Activated T-helper 1 cell treated with anti-CD3 and anti-CD28 coated beads, Interleukin-12 subunit alpha, Interleukin-12 subunit beta, Interleukin-2, Interleukin-4 antibody, amounts not matched to agents 30 ng/mL and 10 ng/mL and 1 ng/mL, durations not matched to agents 14 hours and 24 hours and 36 hours (primary cell): ENCODE measurements at regions of chr11 and their contacts with region 1.

Region 1: DNA sequence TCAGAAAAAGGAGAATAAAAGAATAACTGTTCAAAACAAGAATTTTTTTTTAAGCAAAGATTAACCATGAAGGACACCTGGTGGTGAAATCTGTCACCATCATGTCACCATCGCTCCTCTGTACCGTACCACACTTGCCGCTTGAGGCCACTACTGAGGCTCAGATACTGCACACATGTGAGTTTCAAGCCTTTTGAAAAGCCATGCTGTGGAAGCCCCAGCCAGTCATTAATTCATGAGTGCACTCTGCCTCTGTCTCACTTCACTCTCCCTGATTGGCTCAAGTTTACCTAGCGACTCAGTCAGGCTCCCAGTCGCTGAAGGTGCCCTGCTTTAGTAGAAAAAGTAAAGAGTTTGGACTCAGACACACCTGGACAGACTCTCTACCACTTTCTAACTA is 6.6 kb upstream of the MS4A12 start:
- DNase-seq: no peak
- H3K4me3 Mint-ChIP-seq: no peak overlapping the region
- H3K27ac Mint-ChIP-seq: no peak overlapping the region
- H3K4me1 Mint-ChIP-seq: no peaks in the 10 kb centered on the region
- H3K27me3 Mint-ChIP-seq: peaks cover 8% of the 10 kb centered on the region

Region 2: GRCh38 chr11:60211206-60211605 is 274.8 kb before region 1 on chr11:
- intact Hi-C with region 1: no loop called
- DNase-seq: no peak
- H3K4me3 Mint-ChIP-seq: no peak overlapping the region
- H3K27ac Mint-ChIP-seq: no peak overlapping the region
- H3K4me1 Mint-ChIP-seq: no peaks in the 10 kb centered on the region
- H3K27me3 Mint-ChIP-seq: no peaks in the 10 kb centered on the region

Region 3: DNA sequence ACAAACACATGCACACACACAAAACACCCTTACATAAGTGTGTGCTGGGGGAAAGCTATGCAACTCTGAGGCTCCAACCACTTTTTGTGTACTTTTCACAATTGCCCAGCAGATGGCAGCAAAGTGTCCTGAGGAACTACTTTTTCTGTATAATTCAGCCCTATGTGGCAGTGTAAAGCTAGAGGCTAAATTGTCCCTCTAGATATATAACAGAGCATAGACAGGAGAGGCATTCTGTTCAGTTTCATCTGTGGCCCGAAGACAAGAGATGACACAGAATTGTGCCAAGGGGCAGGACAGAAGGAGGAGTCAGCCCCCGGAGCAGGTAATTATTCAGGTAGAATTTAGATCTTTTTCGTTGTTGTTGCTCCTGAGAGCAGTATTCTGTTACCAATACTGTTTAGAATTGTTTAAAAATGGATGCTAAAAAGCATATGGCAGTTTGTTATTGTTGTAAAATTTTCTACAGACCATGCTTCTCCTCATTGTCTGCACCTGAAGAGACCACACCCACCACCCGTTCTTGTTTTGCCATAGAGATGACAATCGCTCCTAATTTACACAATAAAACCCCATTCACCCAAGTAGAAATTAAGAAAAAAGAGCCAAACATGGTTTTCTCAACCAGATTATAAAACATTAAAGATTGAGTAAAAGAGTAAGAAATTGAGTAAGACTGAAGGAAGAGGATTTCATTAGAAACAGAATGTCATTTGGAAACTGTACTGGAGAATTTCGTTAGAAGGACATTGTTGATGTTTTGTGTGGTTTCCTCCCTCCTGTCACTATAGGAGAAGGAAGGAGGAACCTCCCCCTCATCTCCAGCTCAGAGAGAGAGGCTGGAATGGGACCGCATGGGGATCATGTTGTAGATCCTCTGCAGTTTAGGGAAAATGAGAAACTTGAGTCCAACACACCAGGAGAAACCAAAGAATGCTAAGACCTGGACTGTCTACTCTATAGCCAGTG is 122.2 kb before region 1 on chr11:
- intact Hi-C with region 1: loop called (anchors 1 kb)
- DNase-seq: peak; percentile 40
- H3K4me3 Mint-ChIP-seq: no peak overlapping the region
- H3K27ac Mint-ChIP-seq: no peak overlapping the region
- H3K4me1 Mint-ChIP-seq: no peaks in the 10 kb centered on the region
- H3K27me3 Mint-ChIP-seq: peaks cover 2% of the 10 kb centered on the region